ENCODE measurements at regions of chr4 and their contacts with region 1.

Region 1: GRCh38 chr4:158410272-158410671 is 111.4 kb upstream of the RXFP1 start:
- DNase-seq: no peak
- H3K4me3 ChIP-seq: no peak overlapping the region
- H3K27ac ChIP-seq: no peak overlapping the region
- H3K4me1 ChIP-seq: no peaks in the 10 kb centered on the region; a peak in 1 of 7 replicates
- H3K27me3 ChIP-seq: no peaks in the 10 kb centered on the region
- CTCF ChIP-seq: peak in 2 of 3 experiments; percentile 26 to 29; a peak in 2 of 4 replicates
- EP300 ChIP-seq: no peak
- POLR2A ChIP-seq: no peak
- RAD21 ChIP-seq: peak; percentile 55 to 63

Region 2: GRCh38 chr4:158282252-158282651 is 128.0 kb before region 1 on chr4:
- CTCF ChIA-PET with region 1: no interaction called
- POLR2A ChIA-PET with region 1: no interaction called
- DNase-seq: no peak
- H3K4me3 ChIP-seq: no peak overlapping the region
- H3K27ac ChIP-seq: no peak overlapping the region
- H3K4me1 ChIP-seq: no peaks in the 10 kb centered on the region
- H3K27me3 ChIP-seq: no peaks in the 10 kb centered on the region
- CTCF ChIP-seq: no peak
- EP300 ChIP-seq: no peak
- POLR2A ChIP-seq: no peak
- RAD21 ChIP-seq: no peak

Region 3: GRCh38 chr4:158420782-158421181 is 10.5 kb after region 1 on chr4:
- CTCF ChIA-PET with region 1: interaction called, 22 read pairs
- POLR2A ChIA-PET with region 1: no interaction called
- DNase-seq: no peak
- H3K4me3 ChIP-seq: no peak overlapping the region
- H3K27ac ChIP-seq: no peak overlapping the region
- H3K4me1 ChIP-seq: no peaks in the 10 kb centered on the region
- H3K27me3 ChIP-seq: no peaks in the 10 kb centered on the region
- CTCF ChIP-seq: no peak
- EP300 ChIP-seq: no peak
- POLR2A ChIP-seq: no peak
- RAD21 ChIP-seq: no peak